Endothelial cell of umbilical vein (primary cell): ENCODE measurements at regions of chr5 and their contacts with region 1.

Region 1: GRCh38 chr5:105506692-105507277 is 1944.2 kb upstream of the NUDT12 start:
- DNase-seq: peak; percentile 24
- H3K4me3 ChIP-seq: no peak overlapping the region
- H3K27ac ChIP-seq: no peak overlapping the region
- H3K4me1 ChIP-seq: no peaks in the 10 kb centered on the region
- H3K27me3 ChIP-seq: no peaks in the 10 kb centered on the region
- CTCF ChIP-seq: peak; percentile 23 to 58
- POLR2A ChIP-seq: no peak

Region 2: DNA sequence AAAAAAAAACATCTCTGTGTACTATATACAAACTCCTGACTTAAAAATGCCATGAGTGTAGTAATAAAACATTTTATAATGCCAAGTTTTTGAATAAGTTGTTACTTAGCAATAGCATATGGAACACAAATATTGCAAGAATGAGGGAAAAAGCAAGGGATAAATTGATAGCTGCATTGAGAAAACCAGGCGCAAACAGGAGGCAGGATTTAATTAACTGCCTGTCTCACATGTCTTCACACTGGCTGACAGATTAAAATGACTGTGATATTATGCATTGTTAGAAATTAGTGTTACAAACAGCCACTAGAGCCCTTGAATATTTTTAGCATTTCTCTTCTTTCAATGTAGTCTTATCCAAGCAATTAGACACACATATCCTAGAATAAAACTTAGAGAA is 126.7 kb before region 1 on chr5:
- CTCF ChIA-PET with region 1: no interaction called
- POLR2A ChIA-PET with region 1: no interaction called
- dilution Hi-C with region 1: no loop called
- intact Hi-C with region 1: no loop called
- DNase-seq: no peak
- H3K4me3 ChIP-seq: no peak overlapping the region
- H3K27ac ChIP-seq: no peak overlapping the region
- H3K4me1 ChIP-seq: no peaks in the 10 kb centered on the region
- H3K27me3 ChIP-seq: no peaks in the 10 kb centered on the region
- CTCF ChIP-seq: no peak
- POLR2A ChIP-seq: no peak

Region 3: GRCh38 chr5:106121972-106122605 is 615.3 kb after region 1 on chr5:
- CTCF ChIA-PET with region 1: no interaction called
- POLR2A ChIA-PET with region 1: no interaction called
- dilution Hi-C with region 1: no loop called
- intact Hi-C with region 1: loop called (anchors 2 kb)
- DNase-seq: no peak
- H3K4me3 ChIP-seq: no peak overlapping the region
- H3K27ac ChIP-seq: no peak overlapping the region
- H3K4me1 ChIP-seq: no peaks in the 10 kb centered on the region
- H3K27me3 ChIP-seq: no peaks in the 10 kb centered on the region
- CTCF ChIP-seq: peak; percentile 60 to 70
- POLR2A ChIP-seq: no peak